ENCODE measurements at regions of chr4 and their contacts with region 1.

Region 1: GRCh38 chr4:84503495-84504437 is 4.7 kb upstream of the NKX6-1 start:
- DNase-seq: peak; percentile 43
- ATAC-seq: peak; percentile 65
- H3K4me3 Mint-ChIP-seq: no peak overlapping the region
- H3K27ac Mint-ChIP-seq: no peak overlapping the region
- H3K4me1 Mint-ChIP-seq: peaks cover 3% of the 10 kb centered on the region
- H3K27me3 Mint-ChIP-seq: peaks cover 67% of the 10 kb centered on the region
- CTCF ChIP-seq: peak; percentile 66

Region 2: GRCh38 chr4:84477738-84478137 is 26.0 kb before region 1 on chr4:
- CTCF ChIA-PET with region 1: interaction called, 10 read pairs
- POLR2A ChIA-PET with region 1: no interaction called
- intact Hi-C with region 1: no loop called
- DNase-seq: no peak
- ATAC-seq: no peak
- H3K4me3 Mint-ChIP-seq: no peak overlapping the region
- H3K27ac Mint-ChIP-seq: no peak overlapping the region
- H3K4me1 Mint-ChIP-seq: peaks cover 9% of the 10 kb centered on the region
- H3K27me3 Mint-ChIP-seq: peaks cover 42% of the 10 kb centered on the region
- CTCF ChIP-seq: no peak